PC-9 (cell line): ENCODE measurements at regions of chr4 and their contacts with region 1.

Region 1: GRCh38 chr4:98928505-98929340 is at the start of gene EIF4E:
- DNase-seq: peak; percentile 90 to 98
- H3K4me3 ChIP-seq: peak within 1 kb of the TSS; percentile 96
- H3K27ac ChIP-seq: peak within 1 kb of the TSS; percentile 95
- H3K4me1 ChIP-seq: peaks cover 17% of the 10 kb centered on the region
- H3K27me3 ChIP-seq: no peaks in the 10 kb centered on the region
- CTCF ChIP-seq: no peak
- total RNA-seq, gene EIF4E: 47.1 and 59.6 TPM in 2 replicates

Region 2: DNA sequence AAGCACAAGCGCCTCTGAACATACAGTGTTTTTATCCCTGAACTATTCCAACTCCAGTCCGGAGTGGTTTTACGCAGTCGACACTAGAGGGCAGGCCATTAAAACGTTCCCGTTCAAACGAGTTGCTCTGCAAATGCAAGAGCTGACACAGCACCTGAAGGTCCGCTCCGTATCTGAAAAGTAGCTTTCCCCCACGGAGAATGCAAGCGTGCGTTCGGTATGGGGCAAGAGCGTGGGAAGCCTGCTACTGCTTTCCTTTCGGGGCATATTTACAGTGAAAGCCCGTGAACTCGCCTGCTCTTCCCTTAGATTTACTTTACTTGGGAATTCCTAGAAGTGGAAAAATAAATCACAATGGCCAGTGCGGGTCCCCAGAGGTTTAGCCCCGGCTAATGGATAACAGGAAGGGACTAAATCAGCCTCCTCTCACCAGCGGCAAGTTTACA is 461.1 kb before region 1 on chr4:
- CTCF ChIA-PET with region 1: no interaction called
- POLR2A ChIA-PET with region 1: no interaction called
- intact Hi-C with region 1: loop called (anchors 2 kb)
- DNase-seq: peak; percentile 53 to 69
- H3K4me3 ChIP-seq: peak overlapping the region; percentile 59
- H3K27ac ChIP-seq: no peak overlapping the region
- H3K4me1 ChIP-seq: 0 out of 2 replicates have a peak, but pooled peaks cover 3% of the 10 kb centered on the region
- H3K27me3 ChIP-seq: no peaks in the 10 kb centered on the region
- CTCF ChIP-seq: peak; percentile 81

Region 3: GRCh38 chr4:98995183-98996055 is 66.7 kb after region 1 on chr4 and contains the start of gene METAP1:
- CTCF ChIA-PET with region 1: interaction called, 3 read pairs
- POLR2A ChIA-PET with region 1: interaction called, 5 read pairs
- intact Hi-C with region 1: loop called (anchors 1 kb)
- DNase-seq: peak; percentile 88 to 92
- H3K4me3 ChIP-seq: peak within 1 kb of the TSS; percentile 65
- H3K27ac ChIP-seq: peak within 1 kb of the TSS; percentile 55
- H3K4me1 ChIP-seq: peaks cover 28% of the 10 kb centered on the region
- H3K27me3 ChIP-seq: no peaks in the 10 kb centered on the region
- CTCF ChIP-seq: peak; percentile 55
- total RNA-seq, gene METAP1: 36.7 and 42.0 TPM in 2 replicates

Region 4: GRCh38 chr4:99352602-99353537 is 424.1 kb after region 1 on chr4 and contains the start of gene ADH1C:
- CTCF ChIA-PET with region 1: no interaction called
- POLR2A ChIA-PET with region 1: interaction called, 13 read pairs
- intact Hi-C with region 1: no loop called
- DNase-seq: no peak
- H3K4me3 ChIP-seq: peak within 1 kb of the TSS; percentile 15; the same call in 1 of the 2 replicates
- H3K27ac ChIP-seq: no peak within 1 kb of the TSS
- H3K4me1 ChIP-seq: peaks cover 7% of the 10 kb centered on the region
- H3K27me3 ChIP-seq: no peaks in the 10 kb centered on the region
- CTCF ChIP-seq: no peak
- total RNA-seq, gene ADH1C: 0.50 and 0.63 TPM in 2 replicates

Region 5: DNA sequence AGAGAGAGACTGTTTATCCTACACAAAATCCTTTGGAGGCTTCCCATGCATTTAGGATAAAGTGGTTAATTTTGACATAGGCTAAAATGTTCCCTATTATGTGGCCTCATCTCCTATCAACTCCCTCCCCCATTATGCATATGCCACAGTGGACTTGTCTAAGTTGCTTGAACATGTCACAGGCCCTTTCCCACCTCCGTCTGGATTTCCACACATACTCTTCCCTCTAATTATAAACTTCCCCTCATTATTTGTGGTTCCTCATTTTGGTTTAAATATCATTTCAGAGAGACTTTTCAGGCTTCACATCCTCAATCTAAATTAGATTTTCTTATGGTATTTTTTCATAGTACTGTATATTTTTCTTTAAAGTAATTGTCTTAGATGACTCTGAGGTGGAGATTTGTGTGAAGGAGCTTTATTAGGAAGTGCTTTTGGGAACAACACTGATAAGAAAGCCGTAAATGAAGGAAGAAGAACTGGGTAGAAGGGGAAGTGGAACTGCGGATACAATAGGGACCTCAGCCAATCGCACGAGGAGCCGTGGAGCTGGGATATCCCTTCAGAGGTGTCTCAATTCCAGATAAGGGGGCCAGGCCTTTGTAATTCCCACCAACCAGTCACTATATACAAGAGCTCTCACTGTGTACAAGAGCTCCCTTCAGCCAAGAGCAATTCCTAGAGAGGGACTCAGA is 590.0 kb after region 1 on chr4:
- CTCF ChIA-PET with region 1: interaction called, 10 read pairs
- POLR2A ChIA-PET with region 1: no interaction called
- intact Hi-C with region 1: no loop called
- DNase-seq: no peak
- H3K4me3 ChIP-seq: no peak overlapping the region
- H3K27ac ChIP-seq: no peak overlapping the region
- H3K4me1 ChIP-seq: no peaks in the 10 kb centered on the region
- H3K27me3 ChIP-seq: 0 out of 2 replicates have a peak, but pooled peaks cover 15% of the 10 kb centered on the region
- CTCF ChIP-seq: no peak